AG04449 (cell line): ENCODE measurements at regions of chr14 and their contacts with region 1.

Region 1: DNA sequence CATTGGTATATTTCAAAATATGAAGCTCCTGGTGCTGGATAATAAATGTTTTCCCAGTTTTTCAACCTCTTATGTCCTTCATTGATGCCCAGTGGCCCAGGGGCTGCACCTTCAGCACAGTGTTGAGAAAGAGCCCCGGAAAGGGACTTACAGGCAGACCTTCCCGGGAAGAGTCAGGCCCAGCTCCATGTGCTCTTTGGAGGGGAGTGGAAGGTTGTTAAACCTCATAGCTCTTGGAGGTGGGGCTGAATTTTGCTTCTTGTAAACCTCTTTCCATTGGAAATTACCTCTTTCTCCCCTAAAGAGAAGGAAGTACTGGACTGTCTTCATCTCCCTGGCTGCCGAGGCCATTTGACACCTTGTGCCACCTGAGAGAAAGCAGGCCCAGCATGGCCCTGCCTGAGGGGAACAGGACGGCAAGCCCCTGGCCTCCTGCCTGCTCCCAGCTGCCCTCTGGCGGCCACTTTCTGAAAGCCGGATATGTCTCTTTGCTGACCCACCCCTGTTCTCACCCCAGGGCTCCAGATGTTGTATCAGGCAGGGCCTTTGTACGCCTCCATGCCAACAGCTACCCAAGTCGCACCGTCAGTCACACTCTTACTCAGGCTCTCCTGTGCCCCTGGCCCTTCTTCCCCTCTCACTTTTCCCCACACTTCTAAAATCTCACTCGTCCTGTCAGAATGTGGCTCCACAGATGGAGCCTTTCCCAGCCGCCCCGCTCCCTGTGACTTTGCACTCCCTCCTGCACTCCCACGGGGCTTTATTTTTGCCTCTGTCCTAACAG is 43.0 kb downstream of the EVL start:
- DNase-seq: no peak
- H3K4me3 ChIP-seq: no peak overlapping the region
- CTCF ChIP-seq: peak; percentile 91

Region 2: GRCh38 chr14:99971087-99971940 is 136.9 kb before region 1 on chr14:
- CTCF ChIA-PET with region 1: interaction called, 53 read pairs
- POLR2A ChIA-PET with region 1: interaction called, 4 read pairs
- DNase-seq: no peak
- H3K4me3 ChIP-seq: peak overlapping the region; percentile 79
- CTCF ChIP-seq: no peak

Region 3: GRCh38 chr14:99995700-99996356 is 112.4 kb before region 1 on chr14:
- CTCF ChIA-PET with region 1: interaction called, 15 read pairs
- POLR2A ChIA-PET with region 1: interaction called, 7 read pairs
- DNase-seq: no peak
- H3K4me3 ChIP-seq: no peak overlapping the region
- CTCF ChIP-seq: peak; percentile 62

Region 4: DNA sequence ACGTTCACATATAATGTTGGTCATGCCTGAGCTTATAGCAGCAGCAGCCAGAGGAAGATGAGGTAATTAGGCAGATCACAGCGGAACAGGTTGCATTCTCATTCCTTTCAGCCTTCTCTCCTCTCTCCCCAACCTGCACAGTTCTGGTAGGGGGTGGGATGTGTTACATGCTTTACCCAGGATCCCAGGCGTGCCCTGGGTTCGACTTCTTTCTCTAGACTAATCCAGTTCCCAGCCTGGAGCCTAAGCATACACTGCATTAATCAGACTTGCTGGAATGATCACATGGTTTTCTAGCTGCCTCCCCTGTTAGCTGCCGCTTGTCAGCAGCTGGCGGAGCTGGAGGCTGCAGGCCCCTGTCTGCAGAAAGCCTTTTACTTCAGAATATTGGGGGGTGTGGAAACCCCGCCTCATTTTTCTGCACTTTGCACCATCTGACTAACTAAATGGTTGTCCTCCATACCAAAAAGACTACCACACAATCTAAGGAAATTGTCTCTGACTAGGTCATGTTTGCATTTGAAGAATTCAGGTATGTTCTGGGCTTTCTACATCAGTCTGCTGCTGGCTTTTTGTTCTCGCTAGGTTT is 89.0 kb before region 1 on chr14:
- CTCF ChIA-PET with region 1: interaction called, 10 read pairs
- POLR2A ChIA-PET with region 1: interaction called, 3 read pairs
- DNase-seq: no peak
- H3K4me3 ChIP-seq: no peak overlapping the region
- CTCF ChIP-seq: no peak

Region 5: GRCh38 chr14:100067971-100068959 is 40.0 kb before region 1 on chr14:
- CTCF ChIA-PET with region 1: interaction called, 16 read pairs
- POLR2A ChIA-PET with region 1: interaction called, 3 read pairs
- DNase-seq: no peak
- H3K4me3 ChIP-seq: no peak overlapping the region
- CTCF ChIP-seq: no peak

Region 6: DNA sequence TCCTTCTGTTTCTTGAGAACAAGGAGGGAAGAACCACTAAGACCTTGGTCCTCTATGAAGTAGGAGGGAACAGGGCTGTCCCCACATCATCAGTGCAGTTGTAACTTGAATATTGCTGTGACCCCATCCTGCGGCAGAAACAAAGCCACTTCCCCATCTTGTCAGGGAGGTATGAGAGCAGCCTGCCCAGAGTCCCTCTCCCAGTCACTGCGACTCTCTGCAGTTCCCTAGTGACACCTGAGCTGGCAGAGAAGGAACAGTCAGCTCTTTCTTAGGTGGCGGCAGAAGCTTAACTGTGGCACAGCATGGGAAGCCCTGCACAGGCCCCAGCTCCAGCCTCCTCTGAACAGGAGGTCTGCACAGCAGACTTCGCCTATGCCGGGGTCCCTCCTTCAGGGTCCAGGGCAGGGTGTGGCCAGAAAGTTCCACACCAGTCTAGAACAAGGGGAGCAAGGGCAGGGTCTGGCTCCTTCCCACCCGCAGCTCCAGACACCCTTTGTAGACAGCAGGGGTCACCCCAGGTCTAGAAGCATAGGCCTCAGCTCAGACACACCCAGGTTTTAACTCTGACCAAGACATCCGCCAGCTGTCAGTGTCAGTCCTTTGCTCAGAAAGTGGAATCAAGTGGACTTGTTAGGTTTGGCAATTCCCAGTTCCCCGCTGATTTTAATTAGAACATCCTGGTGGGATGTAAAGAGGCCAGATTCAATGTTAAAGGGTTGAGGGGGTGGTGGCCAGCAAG is 14.4 kb after region 1 on chr14:
- CTCF ChIA-PET with region 1: interaction called, 84 read pairs
- POLR2A ChIA-PET with region 1: no interaction called
- DNase-seq: no peak
- H3K4me3 ChIP-seq: no peak overlapping the region
- CTCF ChIP-seq: no peak

Region 7: DNA sequence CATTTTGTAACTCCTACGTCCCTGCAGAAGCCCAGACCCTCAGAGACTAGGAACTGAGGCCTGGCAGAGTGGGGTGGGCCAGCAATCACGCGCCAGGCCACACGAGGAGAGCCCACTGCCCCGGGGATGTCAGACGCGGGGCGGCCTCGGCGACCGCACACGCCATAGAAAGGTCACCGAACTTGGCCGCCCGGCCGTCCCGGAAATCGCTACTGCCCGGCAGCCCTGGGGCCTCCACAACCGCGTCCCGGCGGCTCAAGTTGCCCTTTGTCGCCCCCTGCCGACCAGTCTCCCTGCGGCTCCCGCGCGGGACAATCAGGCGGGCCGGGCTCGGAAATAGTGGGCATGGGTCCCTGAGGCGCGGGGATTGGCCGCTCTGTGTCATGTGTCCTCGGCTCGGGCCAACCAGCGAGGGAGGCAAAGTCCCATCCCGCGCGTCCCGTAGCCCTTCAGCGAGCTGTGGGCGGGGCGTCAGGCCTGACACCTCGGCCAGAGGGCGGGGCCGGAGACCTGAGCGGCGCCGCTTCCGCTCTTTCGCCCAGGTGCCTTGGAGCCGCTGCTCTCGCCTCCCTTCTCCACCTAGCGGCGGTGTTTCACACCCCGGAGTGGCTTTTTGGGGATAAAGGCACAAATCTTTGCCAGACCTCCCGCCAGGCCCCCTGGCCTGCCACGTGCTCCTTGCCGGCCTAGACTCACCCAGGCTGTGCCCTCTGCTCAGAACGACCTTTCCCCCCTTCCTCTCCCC is 84.6 kb after region 1 on chr14:
- CTCF ChIA-PET with region 1: interaction called, 14 read pairs
- POLR2A ChIA-PET with region 1: no interaction called
- DNase-seq: peak; percentile 68
- H3K4me3 ChIP-seq: peak overlapping the region; percentile 61
- CTCF ChIP-seq: peak; percentile 97

Region 8: GRCh38 chr14:100321473-100322137 is 213.4 kb after region 1 on chr14:
- CTCF ChIA-PET with region 1: no interaction called
- POLR2A ChIA-PET with region 1: no interaction called
- DNase-seq: no peak
- H3K4me3 ChIP-seq: no peak overlapping the region
- CTCF ChIP-seq: no peak